ENCODE measurements at regions of chr10 and their contacts with region 1.

Region 1: DNA sequence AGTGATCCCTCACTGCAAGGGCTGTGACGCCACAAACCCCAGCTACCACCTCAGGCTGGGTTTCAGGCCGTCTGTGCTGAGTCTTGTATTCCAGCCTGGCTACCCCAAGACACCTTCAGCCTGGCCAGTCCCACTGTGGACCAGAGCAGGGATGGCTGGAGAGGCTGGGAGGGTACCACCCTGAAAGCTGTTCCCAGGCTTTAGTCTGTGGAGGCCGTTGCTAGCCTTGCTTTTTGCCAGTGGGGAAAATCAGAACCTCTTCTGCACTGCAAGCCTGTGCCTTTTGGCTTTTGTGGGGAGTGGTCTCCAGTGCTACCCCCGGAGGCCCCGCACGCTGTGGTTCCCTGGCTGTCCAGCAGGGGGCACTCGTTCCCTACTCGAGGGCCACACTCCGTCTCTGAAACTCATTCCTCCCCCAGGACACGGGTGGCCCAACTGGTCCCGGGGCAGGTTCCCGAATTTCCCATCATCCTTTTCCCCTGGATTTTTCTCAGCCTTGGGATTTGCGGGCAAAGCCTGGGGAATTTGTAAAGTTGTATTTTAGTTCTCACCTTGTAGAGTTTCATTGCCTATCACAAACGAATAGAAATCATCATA is 128.4 kb upstream of the BTBD16 start:
- DNase-seq: peak; percentile 35
- ATAC-seq: no peak
- H3K4me3 ChIP-seq: peak overlapping the region; percentile 35; the same call in 1 of the 2 replicates
- H3K27ac ChIP-seq: peak overlapping the region; percentile 99
- H3K4me1 ChIP-seq: peaks cover 53% of the 10 kb centered on the region
- H3K27me3 ChIP-seq: no peaks in the 10 kb centered on the region
- CTCF ChIP-seq: peak; percentile 89

Region 2: GRCh38 chr10:122051251-122051996 is 91.3 kb before region 1 on chr10:
- CTCF ChIA-PET with region 1: no interaction called
- POLR2A ChIA-PET with region 1: interaction called, 3 read pairs
- intact Hi-C with region 1: loop called (anchors 2 kb)
- DNase-seq: peak; percentile 92
- ATAC-seq: peak; percentile 60
- H3K4me3 ChIP-seq: no peak overlapping the region
- H3K27ac ChIP-seq: peak overlapping the region; percentile 92
- H3K4me1 ChIP-seq: peaks cover 36% of the 10 kb centered on the region
- H3K27me3 ChIP-seq: no peaks in the 10 kb centered on the region
- CTCF ChIP-seq: peak; percentile 83

Region 3: GRCh38 chr10:122072491-122072890 is 70.2 kb before region 1 on chr10:
- CTCF ChIA-PET with region 1: no interaction called
- POLR2A ChIA-PET with region 1: no interaction called
- intact Hi-C with region 1: no loop called
- DNase-seq: no peak
- ATAC-seq: no peak
- H3K4me3 ChIP-seq: no peak overlapping the region
- H3K27ac ChIP-seq: no peak overlapping the region
- H3K4me1 ChIP-seq: peaks cover 10% of the 10 kb centered on the region
- H3K27me3 ChIP-seq: no peaks in the 10 kb centered on the region
- CTCF ChIP-seq: no peak

Region 4: GRCh38 chr10:122239578-122240257 is 97.0 kb after region 1 on chr10:
- CTCF ChIA-PET with region 1: no interaction called
- POLR2A ChIA-PET with region 1: no interaction called
- intact Hi-C with region 1: loop called (anchors 5 kb)
- DNase-seq: no peak
- ATAC-seq: no peak
- H3K4me3 ChIP-seq: no peak overlapping the region
- H3K27ac ChIP-seq: no peak overlapping the region
- H3K4me1 ChIP-seq: peaks cover 19% of the 10 kb centered on the region
- H3K27me3 ChIP-seq: no peaks in the 10 kb centered on the region
- CTCF ChIP-seq: no peak

Measured in PC-3 (cell line).